ENCODE measurements at regions of chr11 and their contacts with region 1.

Region 1: DNA sequence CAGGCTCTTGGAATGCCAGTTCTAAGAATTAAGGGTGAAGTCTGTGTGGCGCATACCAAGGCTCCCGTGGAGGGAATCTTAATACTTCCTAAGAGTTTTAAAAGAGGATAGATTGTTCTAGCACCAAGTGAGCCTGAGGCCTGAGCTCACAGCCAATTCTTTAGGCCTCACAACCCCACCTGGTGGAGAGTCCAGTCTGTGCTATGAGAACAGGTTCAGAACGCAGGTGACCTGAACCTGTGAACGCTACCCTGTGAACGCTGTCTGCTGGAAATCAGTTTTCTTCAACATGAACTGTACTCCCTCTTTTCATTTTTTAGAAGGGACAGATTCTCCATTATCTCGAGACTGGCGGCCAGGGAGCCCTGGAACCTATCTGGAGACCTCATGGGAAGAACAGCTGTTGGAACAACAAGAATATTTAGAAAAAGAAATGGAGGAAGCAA is 43.2 kb upstream of the DLAT start:
- DNase-seq: peak; percentile 71
- CTCF ChIP-seq: peak; percentile 59

Region 2: GRCh38 chr11:111926505-111927391 is 55.3 kb before region 1 on chr11:
- CTCF ChIA-PET with region 1: interaction called, 138 read pairs
- POLR2A ChIA-PET with region 1: no interaction called
- DNase-seq: peak; percentile 99
- CTCF ChIP-seq: no peak

Region 3: GRCh38 chr11:111938687-111939160 is 43.3 kb before region 1 on chr11:
- CTCF ChIA-PET with region 1: interaction called, 138 read pairs
- POLR2A ChIA-PET with region 1: interaction called, 3 read pairs
- DNase-seq: peak; percentile 69
- CTCF ChIP-seq: no peak

Region 4: DNA sequence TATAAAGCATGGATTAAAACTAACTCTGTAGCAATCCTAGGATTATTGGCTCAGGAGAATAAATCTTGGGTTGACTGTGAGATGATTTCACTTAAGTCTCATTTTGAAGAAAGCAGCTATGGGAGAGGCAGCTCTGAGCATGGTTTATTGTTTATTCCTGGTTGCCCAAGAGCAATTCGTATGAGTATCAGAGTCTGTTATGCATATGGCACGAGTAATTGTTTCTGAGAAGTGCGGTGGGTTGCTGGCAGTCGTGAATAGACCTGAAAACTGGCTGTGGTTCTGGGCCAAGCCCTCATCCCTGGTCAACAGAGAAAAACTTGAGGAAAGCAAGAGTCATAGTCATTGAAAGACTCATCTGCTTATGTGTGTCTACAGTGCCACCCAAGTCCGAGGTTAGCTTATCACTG is 18.1 kb before region 1 on chr11:
- CTCF ChIA-PET with region 1: interaction called, 11 read pairs
- POLR2A ChIA-PET with region 1: no interaction called
- DNase-seq: no peak
- CTCF ChIP-seq: no peak

Region 5: DNA sequence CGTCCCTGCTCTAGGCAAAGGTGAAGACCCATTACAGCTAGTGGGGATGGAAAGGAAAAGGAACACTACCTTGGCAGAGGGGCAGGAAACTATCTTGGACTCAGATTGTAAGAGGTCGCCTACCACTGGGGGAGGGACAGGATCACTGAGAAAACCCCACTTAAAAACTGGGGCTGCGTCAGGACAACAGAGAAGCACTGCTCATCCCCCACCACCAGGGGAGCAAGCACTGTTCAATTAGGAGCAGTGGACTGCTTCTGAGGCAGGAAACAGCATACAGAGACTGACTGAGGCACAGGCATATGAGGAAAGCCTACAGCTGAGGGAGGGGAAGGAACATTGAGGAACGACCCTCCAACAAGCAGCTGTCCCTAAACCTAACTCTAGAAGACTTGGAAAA is 22.3 kb after region 1 on chr11:
- CTCF ChIA-PET with region 1: interaction called, 14 read pairs
- POLR2A ChIA-PET with region 1: no interaction called
- DNase-seq: peak; percentile 71
- CTCF ChIP-seq: peak; percentile 65

Region 6: GRCh38 chr11:112248201-112248600 is 266.2 kb after region 1 on chr11:
- CTCF ChIA-PET with region 1: no interaction called
- POLR2A ChIA-PET with region 1: no interaction called
- DNase-seq: no peak
- CTCF ChIP-seq: no peak